T-cell (primary cell): ENCODE measurements at regions of chr6 and their contacts with region 1.

Region 1: GRCh38 chr6:143529095-143529494 is 17.6 kb upstream of the FUCA2 start:
- DNase-seq: peak in 1 of 35 experiments; percentile 32
- ATAC-seq: peak; percentile 36 to 62 (median 54)
- H3K4me3 ChIP-seq: no peak overlapping the region
- H3K4me3 Mint-ChIP-seq: peak overlapping the region in 1 of 3 donors; percentile 47
- H3K27ac ChIP-seq: peak overlapping the region; percentile 74
- H3K27ac Mint-ChIP-seq: peak overlapping the region; percentile 97 to 99
- H3K4me1 ChIP-seq: peaks cover 10 to 11% of the 10 kb centered on the region in 2 experiments
- H3K4me1 Mint-ChIP-seq: peaks cover 14 to 17% (median 15%) of the 10 kb centered on the region in 3 donors
- H3K27me3 ChIP-seq: no peaks in the 10 kb centered on the region
- H3K27me3 Mint-ChIP-seq: no peaks in the 10 kb centered on the region

Region 2: DNA sequence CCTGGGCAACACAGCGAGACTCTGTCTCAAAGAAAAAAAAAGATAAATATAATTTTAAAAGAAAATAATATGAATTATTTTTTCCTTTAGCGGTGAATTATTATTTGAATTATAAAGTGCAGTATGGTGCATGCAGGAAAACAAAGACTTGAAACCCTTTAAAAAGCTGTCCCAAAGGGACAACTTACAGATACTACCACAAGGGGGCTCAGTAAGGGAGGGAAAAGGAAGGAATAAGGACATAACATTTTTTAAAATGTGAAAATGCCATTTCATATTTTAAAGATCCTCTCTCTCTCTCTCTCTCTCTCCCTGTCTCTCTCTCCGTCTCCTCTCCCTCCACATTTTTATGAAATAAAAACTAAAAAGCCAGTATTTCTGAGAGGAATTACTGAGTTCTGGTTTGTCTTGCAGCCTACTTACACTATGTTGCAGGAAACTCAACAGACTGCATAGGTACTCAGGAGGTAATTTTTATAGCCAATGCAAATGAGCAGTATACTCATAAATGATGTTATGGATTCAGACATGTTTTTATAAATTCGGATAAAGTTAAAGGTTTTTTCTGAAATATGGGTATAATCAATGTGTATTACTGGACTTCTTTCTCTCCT is 1851.4 kb before region 1 on chr6:
- CTCF ChIA-PET with region 1: interaction called in 1 of 2 experiments, 10 read pairs
- POLR2A ChIA-PET with region 1: no interaction called
- DNase-seq: peak in 1 of 35 experiments; percentile 35
- ATAC-seq: no peak
- H3K4me3 ChIP-seq: no peak overlapping the region
- H3K4me3 Mint-ChIP-seq: no peak overlapping the region
- H3K27ac ChIP-seq: no peak overlapping the region
- H3K27ac Mint-ChIP-seq: no peak overlapping the region
- H3K4me1 ChIP-seq: no peaks in the 10 kb centered on the region
- H3K4me1 Mint-ChIP-seq: peaks cover 0 to 3% (median 2%) of the 10 kb centered on the region in 3 donors
- H3K27me3 ChIP-seq: no peaks in the 10 kb centered on the region
- H3K27me3 Mint-ChIP-seq: peaks cover 0 to 3% of the 10 kb centered on the region in 2 donors